Sciatic nerve (tissue), 2 donors: ENCODE measurements at regions of chr2 and their contacts with region 1.

Region 1: GRCh38 chr2:159118115-159118858 is 149.8 kb downstream of the TANC1 start:
- DNase-seq: peak; percentile 94
- ATAC-seq: peak; percentile 94

Region 2: DNA sequence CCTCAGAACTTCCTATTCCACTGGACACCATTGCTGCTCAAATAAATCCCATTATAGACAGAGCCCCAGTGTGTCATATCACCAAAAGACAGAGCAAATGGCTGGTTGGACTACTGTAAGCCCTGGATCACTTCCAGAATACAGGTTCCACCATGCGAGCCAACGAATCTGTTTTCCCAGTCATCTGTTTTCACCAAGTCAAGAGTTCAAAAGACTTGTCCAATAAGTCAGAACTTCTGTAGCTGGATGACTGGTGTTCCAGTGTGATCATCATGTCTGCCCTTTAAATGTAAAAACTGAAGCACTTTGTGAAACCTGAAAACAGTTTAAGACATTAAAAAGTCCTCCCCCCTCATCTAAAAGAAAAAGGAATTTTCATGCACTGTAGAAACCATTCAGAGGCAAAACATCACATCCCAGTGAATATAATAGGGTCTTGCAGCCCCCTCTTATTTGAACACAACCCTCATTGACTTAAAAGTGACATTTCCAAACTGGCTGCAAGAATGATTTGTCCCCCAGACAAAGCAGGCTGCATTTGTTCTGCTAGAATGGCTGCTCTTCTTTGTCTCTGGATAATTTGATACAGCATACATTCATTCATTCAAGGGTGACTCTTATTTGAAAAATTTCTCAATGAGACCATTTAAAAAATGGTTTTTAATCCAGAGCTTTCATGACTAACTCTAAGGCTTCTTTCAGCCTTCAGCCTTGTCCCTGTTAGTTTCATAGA is 214.4 kb before region 1 on chr2:
- intact Hi-C with region 1: loop called (anchors 2 kb)
- DNase-seq: no peak
- ATAC-seq: no peak

Region 3: GRCh38 chr2:159146996-159147666 is 28.8 kb after region 1 on chr2:
- intact Hi-C with region 1: no loop called
- DNase-seq: no peak
- ATAC-seq: peak; percentile 58